ENCODE measurements at regions of chr1 and their contacts with region 1.

Region 1: GRCh38 chr1:163174524-163175437 is 27.9 kb downstream of the RGS5 start:
- DNase-seq: peak; percentile 1
- H3K4me3 Mint-ChIP-seq: no peak overlapping the region
- H3K27ac Mint-ChIP-seq: no peak overlapping the region
- H3K4me1 Mint-ChIP-seq: no peaks in the 10 kb centered on the region
- H3K27me3 Mint-ChIP-seq: peaks cover 4% of the 10 kb centered on the region

Region 2: DNA sequence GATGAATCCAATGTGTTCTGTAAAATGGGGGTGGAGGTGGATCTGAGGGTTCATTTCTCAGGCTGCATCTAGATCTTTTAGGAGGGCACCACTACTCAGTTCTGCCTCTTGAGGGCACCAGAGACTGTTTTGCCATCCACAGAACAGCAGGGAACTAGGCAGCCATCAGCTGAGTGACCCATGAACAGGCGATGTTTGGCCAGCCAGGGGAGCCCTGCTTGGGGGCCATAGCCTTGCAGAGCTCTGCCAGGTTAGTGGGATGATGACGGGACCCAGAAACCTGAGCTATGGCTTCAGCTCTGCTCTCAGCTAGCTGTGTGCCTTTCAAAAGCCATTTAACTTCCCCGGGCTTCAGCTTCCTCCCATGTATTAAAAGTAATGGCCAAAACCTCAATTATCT is 1118.7 kb before region 1 on chr1:
- intact Hi-C with region 1: loop called (anchors 10 kb)
- DNase-seq: peak; percentile 9
- H3K4me3 Mint-ChIP-seq: no peak overlapping the region
- H3K27ac Mint-ChIP-seq: no peak overlapping the region
- H3K4me1 Mint-ChIP-seq: no peaks in the 10 kb centered on the region
- H3K27me3 Mint-ChIP-seq: peaks cover 6% of the 10 kb centered on the region

Region 3: GRCh38 chr1:162854245-162854882 is 320.4 kb before region 1 on chr1:
- intact Hi-C with region 1: loop called (anchors 1 kb)
- DNase-seq: no peak
- H3K4me3 Mint-ChIP-seq: no peak overlapping the region
- H3K27ac Mint-ChIP-seq: no peak overlapping the region
- H3K4me1 Mint-ChIP-seq: no peaks in the 10 kb centered on the region
- H3K27me3 Mint-ChIP-seq: peaks cover 3% of the 10 kb centered on the region

Region 4: GRCh38 chr1:162878000-162878596 is 296.7 kb before region 1 on chr1:
- intact Hi-C with region 1: loop called (anchors 1 kb)
- DNase-seq: no peak
- H3K4me3 Mint-ChIP-seq: no peak overlapping the region
- H3K27ac Mint-ChIP-seq: no peak overlapping the region
- H3K4me1 Mint-ChIP-seq: no peaks in the 10 kb centered on the region
- H3K27me3 Mint-ChIP-seq: peaks cover 11% of the 10 kb centered on the region

Region 5: DNA sequence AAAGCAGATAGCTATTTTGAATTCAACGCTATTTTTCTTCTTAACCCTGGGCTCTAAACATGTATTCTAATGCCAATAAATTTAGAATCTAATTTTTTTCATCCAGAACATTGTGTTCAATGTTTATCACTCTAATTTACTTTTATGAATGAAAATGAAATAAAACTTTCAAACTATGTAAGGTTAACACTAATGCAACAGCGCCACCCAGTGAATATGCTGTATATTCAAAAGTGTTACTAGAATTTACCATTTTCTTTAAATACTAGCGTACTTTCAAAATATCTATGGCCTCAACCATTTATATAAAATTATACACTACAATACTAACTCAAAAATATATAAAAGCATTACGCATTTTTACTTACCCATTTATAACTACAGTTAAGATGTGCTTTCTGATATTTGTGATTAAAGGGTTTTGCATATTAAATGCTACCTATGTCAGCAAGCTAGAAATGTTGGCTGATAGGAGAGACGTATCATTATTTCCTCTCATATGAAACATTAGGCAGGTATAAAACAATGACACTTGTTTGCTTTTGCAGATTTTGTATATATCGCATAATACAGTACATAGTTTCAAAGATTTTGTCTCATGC is 141.1 kb after region 1 on chr1:
- intact Hi-C with region 1: loop called (anchors 2 kb)
- DNase-seq: no peak
- H3K4me3 Mint-ChIP-seq: no peak overlapping the region
- H3K27ac Mint-ChIP-seq: no peak overlapping the region
- H3K4me1 Mint-ChIP-seq: peaks cover 3% of the 10 kb centered on the region
- H3K27me3 Mint-ChIP-seq: no peaks in the 10 kb centered on the region